Activated naive CD4-positive, alpha-beta T cell treated with anti-CD3 and anti-CD28 coated beads for 36 hours (primary cell): ENCODE measurements at regions of chr5 and their contacts with region 1.

Region 1: DNA sequence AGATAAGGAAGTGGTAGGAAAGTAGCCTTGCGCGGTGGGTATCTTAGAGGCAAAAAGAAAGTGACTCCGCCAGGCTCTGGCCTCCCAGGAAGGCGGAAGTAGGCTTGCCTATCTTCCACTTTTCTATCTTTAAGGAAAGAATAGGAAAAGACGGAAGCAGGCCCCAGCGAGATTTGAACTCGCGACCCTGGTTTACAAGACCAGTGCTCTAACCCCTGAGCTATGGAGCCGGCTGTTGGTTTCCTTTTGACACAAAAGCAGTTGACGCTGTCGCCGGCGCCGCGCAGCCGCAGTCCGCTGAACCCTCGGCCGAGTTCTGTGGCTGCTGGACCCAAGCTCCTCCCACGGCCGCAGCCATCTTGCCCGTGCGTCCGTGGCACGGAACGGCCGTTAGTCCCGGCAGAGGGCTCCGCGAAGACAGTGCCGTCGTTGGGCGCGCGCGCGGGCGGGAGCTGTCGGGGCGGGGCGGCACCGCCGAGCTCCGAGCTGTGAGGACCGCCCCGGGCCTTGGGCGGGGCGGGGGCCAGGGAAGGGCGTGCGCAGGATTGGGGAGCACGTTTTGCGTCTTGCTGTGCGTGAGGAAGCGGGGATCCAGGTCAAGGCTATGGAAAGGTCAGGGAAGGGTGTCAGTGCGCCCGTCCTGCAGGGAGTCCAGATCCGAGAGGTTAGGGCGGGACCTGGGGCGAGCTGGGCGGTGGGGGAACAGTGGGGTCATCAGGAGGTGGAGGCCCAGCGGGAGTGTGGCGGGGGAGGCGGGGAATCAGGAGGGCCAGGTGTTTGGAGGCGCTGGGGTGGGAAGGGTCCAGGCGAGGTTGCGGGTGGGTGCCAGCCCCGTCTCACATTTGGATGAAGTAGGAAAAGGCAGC is 13.2 kb downstream of the TRIM7 start:
- DNase-seq: peak; percentile 95
- H3K4me3 Mint-ChIP-seq: peak overlapping the region; percentile 85
- H3K27ac Mint-ChIP-seq: peak overlapping the region; percentile 92
- H3K4me1 Mint-ChIP-seq: peaks cover 25% of the 10 kb centered on the region
- H3K27me3 Mint-ChIP-seq: peaks cover 9% of the 10 kb centered on the region

Region 2: DNA sequence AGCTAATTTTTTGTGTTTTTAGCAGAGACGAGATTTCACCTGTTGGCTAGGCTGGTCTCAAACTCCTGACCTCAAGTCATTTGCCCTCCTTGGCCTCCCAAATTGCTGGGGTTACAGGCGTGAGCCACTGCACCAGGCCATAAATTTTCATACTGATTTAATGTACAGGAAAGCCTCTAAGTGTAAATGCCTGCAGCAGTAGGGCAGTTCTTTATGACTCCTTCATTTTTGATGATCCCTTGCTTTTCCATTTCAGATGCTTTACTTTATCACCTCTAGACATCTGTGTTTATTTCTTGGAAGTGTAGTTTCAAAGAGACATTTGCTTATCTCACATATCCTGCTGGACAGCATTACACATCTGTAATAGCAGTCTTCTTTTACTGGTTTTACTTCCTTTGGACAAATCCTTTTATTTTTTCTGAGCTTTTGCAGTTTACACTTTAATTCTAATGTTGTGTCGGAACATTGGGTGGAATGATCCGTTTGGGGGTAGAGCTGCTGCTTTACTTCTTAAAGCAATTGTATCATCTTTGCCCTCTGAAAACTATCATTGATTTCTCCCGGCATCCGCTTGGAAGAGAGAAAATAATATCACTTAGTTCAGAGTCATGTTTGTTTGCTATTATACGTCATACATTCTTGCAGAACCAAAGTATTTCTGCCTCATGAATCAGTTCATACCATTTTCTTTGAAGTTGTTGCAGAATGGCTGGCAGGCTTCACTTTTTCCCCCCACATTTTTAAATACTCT is 636.4 kb before region 1 on chr5:
- CTCF ChIA-PET with region 1: no interaction called
- intact Hi-C with region 1: no loop called
- DNase-seq: no peak
- H3K4me3 Mint-ChIP-seq: no peak overlapping the region
- H3K27ac Mint-ChIP-seq: no peak overlapping the region
- H3K4me1 Mint-ChIP-seq: peaks cover 7% of the 10 kb centered on the region
- H3K27me3 Mint-ChIP-seq: no peaks in the 10 kb centered on the region

Region 3: GRCh38 chr5:180910735-180911134 is 281.0 kb before region 1 on chr5:
- CTCF ChIA-PET with region 1: no interaction called
- intact Hi-C with region 1: no loop called
- DNase-seq: no peak
- H3K4me3 Mint-ChIP-seq: no peak overlapping the region
- H3K27ac Mint-ChIP-seq: no peak overlapping the region
- H3K4me1 Mint-ChIP-seq: no peaks in the 10 kb centered on the region
- H3K27me3 Mint-ChIP-seq: peaks cover 10% of the 10 kb centered on the region

Region 4: GRCh38 chr5:181173420-181174342 is 18.1 kb before region 1 on chr5:
- CTCF ChIA-PET with region 1: interaction called, 12 read pairs
- intact Hi-C with region 1: loop called (anchors 1 kb)
- DNase-seq: peak; percentile 91
- H3K4me3 Mint-ChIP-seq: peak overlapping the region; percentile 89
- H3K27ac Mint-ChIP-seq: peak overlapping the region; percentile 81
- H3K4me1 Mint-ChIP-seq: peaks cover 41% of the 10 kb centered on the region
- H3K27me3 Mint-ChIP-seq: peaks cover 51% of the 10 kb centered on the region

Region 5: GRCh38 chr5:181207214-181208107 is 15.7 kb after region 1 on chr5:
- CTCF ChIA-PET with region 1: interaction called, 15 read pairs
- intact Hi-C with region 1: loop called (anchors 1 kb)
- DNase-seq: peak; percentile 92
- H3K4me3 Mint-ChIP-seq: peak overlapping the region; percentile 92
- H3K27ac Mint-ChIP-seq: peak overlapping the region; percentile 94
- H3K4me1 Mint-ChIP-seq: peaks cover 32% of the 10 kb centered on the region
- H3K27me3 Mint-ChIP-seq: peaks cover 19% of the 10 kb centered on the region

Region 6: GRCh38 chr5:181217803-181218062 is 26.0 kb after region 1 on chr5:
- CTCF ChIA-PET with region 1: no interaction called
- intact Hi-C with region 1: loop called (anchors 1 kb)
- DNase-seq: peak; percentile 58
- H3K4me3 Mint-ChIP-seq: peak overlapping the region; percentile 94
- H3K27ac Mint-ChIP-seq: peak overlapping the region; percentile 90
- H3K4me1 Mint-ChIP-seq: peaks cover 38% of the 10 kb centered on the region
- H3K27me3 Mint-ChIP-seq: peaks cover 8% of the 10 kb centered on the region

Region 7: GRCh38 chr5:181223058-181223728 is 31.4 kb after region 1 on chr5 and contains the start of gene TRIM41:
- CTCF ChIA-PET with region 1: no interaction called
- intact Hi-C with region 1: loop called (anchors 1 kb)
- DNase-seq: peak; percentile 97
- H3K4me3 Mint-ChIP-seq: peak within 1 kb of the TSS; percentile 96
- H3K27ac Mint-ChIP-seq: peak within 1 kb of the TSS; percentile 100
- H3K4me1 Mint-ChIP-seq: peaks cover 55% of the 10 kb centered on the region
- H3K27me3 Mint-ChIP-seq: peaks cover 6% of the 10 kb centered on the region
- total RNA-seq, gene TRIM41: 36.5 to 37.3 TPM

Region 8: DNA sequence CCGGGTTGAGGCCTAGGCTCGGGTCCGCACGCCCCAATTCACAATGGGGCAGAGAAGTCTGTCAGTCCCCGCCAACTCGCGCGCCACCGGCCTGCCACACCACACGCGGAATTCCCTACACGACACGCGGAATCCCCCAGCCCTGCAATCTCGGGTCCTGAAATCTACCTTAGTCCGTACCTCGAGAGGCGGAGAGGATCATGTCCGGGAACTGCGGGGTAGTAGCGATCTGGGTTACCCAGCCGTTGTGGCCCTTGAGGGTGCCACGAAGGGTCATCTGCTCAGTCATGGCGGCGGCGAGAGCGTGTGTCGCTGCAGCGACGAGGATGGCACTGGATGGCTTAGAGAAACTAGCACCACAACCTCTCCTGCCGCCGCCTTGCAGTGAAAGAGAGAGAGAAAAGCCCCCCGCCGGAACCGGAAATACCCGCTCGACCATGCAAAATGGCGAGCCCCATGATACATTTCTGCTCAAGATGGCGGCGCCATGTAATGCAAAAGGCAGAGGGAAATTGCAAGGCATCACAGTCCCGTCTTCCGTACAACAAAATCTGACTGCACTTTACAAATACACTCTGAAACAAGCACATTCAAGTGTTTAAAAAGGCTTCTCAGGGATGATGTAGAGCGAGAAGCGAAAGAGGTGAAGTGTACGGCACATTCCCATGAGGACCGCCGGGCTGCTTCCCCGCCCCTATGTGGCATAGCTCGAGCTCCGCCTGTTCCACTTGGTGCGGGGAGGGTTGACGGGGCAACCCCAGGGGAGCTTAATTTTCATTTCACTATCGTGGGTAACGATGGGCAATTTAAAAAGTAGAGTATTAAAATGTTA is 52.0 kb after region 1 on chr5 and contains the start of gene RACK1:
- CTCF ChIA-PET with region 1: interaction called, 4 read pairs
- intact Hi-C with region 1: loop called (anchors 1 kb)
- DNase-seq: peak; percentile 94
- H3K4me3 Mint-ChIP-seq: peak within 1 kb of the TSS; percentile 95
- H3K27ac Mint-ChIP-seq: peak within 1 kb of the TSS; percentile 99
- H3K4me1 Mint-ChIP-seq: peaks cover 60% of the 10 kb centered on the region
- H3K27me3 Mint-ChIP-seq: no peaks in the 10 kb centered on the region
- total RNA-seq, gene RACK1: 3,176 to 3,362 TPM

Region 9: DNA sequence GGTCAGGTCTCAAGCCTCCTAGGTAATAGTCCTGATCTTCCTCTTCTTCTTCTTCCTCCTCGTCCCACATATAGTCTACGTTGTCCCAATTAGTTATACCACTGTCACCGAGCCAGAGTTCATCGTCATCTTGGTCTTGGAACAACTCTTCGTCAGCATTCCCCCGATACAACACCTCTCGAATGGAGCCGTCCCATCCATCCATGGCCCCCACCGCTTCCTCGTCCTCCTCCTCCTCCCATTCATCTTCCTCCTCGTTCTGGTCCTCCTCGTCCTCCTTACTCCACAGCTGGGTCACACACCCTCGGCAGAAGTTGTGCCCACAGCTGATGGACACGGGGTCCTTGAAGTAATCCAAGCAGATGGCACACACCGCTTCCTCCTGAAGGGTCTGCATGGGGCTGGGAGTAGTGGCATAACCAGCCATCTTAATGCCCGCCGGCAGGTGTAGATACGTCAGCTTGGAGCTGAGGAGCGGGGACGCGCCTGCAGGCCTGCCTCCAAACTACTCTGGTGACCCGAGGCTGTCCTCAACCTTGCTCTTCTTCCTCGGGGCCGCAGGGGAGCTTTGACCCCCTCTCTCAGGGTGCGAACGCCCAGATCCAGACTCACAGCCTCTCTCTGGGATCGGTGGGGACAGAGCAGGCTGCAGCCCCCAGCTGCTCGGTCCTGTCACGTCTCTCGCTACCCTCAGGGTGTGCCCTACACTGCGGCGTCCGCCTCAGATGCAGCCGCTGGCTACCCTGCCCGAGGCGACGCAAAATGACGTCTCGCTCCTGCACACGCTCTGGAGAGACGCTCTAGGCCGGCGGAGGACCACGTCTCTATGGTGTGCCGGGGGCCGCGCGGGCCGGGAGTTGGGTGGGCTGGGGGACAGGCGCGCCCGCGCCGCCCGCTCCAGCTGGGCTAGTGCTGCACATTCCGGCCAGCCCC is 68.9 kb after region 1 on chr5 and contains the start of gene TRIM52:
- CTCF ChIA-PET with region 1: interaction called, 3 read pairs
- intact Hi-C with region 1: loop called (anchors 1 kb)
- DNase-seq: peak; percentile 91
- H3K4me3 Mint-ChIP-seq: peak within 1 kb of the TSS; percentile 92
- H3K27ac Mint-ChIP-seq: peak within 1 kb of the TSS; percentile 94
- H3K4me1 Mint-ChIP-seq: peaks cover 37% of the 10 kb centered on the region
- H3K27me3 Mint-ChIP-seq: no peaks in the 10 kb centered on the region
- total RNA-seq, gene TRIM52: 10.5 to 10.9 TPM